Ascending aorta (tissue), 2 donors: ENCODE measurements at regions of chr5 and their contacts with region 1.

Region 1: DNA sequence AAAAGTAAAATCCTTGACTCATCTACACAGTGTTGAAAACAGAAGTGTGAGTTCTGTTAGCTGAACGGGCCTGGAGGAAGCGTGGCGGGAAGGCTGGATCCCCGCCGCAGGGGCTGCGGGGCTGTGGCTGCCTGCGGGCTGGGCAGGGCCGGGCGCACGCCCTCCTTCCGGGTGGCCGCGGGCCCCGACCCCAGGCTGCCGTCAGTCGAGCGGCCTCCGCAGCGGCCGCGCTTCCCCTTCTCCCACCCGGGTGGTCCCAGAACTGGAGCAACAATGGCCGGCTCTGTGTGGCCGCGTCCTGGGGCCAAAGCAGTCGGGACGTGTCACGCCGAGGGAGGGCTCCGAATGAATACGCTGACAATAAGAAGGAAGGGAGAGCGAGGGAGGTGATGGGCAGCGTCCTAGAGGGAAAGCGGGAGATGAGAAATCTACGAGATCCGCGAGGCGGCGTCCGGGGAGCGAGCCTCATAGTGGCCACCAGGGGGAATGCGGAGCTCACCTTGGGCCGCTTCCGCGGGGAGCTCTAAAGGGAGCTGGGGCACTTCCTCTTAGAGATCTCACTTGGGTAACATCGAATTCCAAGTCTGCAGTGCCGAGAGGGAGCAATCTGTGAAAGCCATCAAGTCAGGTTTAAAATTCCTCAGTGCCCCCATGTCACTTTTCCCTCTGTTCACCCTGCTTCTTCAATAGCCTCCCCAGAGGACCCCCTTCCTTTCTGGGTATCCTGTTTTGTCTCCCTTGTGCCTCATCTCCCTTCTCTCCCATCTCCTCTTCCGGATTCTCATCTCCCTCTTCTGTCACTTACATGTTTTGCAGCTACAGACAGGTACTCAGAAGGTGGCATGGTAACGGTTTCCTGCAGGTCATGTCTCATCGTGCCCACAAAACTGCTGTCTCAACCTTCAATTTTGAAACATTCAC is 83.9 kb downstream of the SLC1A3 start:
- DNase-seq: peak in 1 of 2 donors; percentile 86
- H3K4me3 ChIP-seq: peak overlapping the region; percentile 63 to 81
- H3K27ac ChIP-seq: peak overlapping the region; percentile 67 to 80
- H3K4me1 ChIP-seq: peaks cover 0 to 15% of the 10 kb centered on the region in 2 donors
- H3K27me3 ChIP-seq: no peaks in the 10 kb centered on the region
- CTCF ChIP-seq: peak; percentile 63 to 85 (median 76)

Region 2: DNA sequence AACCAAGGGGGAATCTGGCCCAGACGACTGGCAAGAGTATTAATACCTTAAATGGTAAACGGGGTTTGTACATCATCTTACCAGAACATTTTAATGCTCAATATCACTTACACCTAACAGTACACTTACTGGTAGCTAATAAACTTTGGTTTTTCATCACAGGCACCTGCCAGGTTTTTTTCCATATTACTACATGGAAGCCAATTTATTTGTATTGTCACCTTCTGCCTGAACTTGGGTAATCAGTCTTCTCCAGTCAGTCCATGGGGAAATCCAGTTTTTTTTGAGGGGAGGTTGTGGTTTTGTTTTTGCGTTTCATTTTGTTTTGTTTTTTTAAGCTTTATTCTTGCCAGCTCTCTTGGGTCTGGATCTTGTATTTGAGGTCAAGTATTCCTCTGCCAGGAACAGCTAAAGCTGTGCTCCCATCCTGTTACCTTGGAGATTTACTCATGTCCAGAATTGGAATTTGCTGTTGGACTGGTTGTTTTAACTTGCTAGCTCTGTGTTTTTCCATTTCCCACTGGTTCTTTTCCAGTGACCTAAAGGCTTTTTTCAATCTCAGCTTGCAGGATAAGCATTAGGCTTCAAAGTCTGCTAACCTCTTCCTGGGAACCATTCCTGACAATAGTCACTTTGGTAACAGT is 437.5 kb before region 1 on chr5:
- intact Hi-C with region 1: loop called (anchors 5 kb)
- DNase-seq: no peak
- H3K4me3 ChIP-seq: peak overlapping the region in 1 of 2 donors; percentile 23
- H3K27ac ChIP-seq: peak overlapping the region; percentile 55 to 60
- H3K4me1 ChIP-seq: peaks cover 4 to 18% of the 10 kb centered on the region in 2 donors
- H3K27me3 ChIP-seq: no peaks in the 10 kb centered on the region
- CTCF ChIP-seq: no peak

Region 3: DNA sequence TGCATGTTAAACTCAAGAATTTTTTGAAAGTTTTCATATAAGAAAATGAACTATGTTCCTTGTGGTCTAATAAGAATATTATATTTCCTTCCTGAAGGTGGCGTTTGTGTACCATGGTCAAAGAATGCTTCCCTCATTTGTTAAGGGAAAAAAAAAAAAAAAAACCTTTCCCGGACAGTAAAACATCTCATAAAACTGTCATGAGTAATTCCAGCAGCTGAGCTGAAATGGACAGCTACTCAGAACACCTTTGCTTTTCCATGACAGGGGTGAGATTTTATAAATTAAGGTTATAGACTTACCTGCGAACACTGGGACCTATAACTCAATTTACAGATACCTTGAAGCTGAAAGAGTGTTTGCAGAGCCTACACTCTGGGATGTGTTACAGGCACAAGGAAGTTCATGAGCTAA is 275.4 kb before region 1 on chr5:
- intact Hi-C with region 1: loop called (anchors 1 kb)
- DNase-seq: no peak
- H3K4me3 ChIP-seq: no peak overlapping the region
- H3K27ac ChIP-seq: no peak overlapping the region
- H3K4me1 ChIP-seq: no peaks in the 10 kb centered on the region
- H3K27me3 ChIP-seq: no peaks in the 10 kb centered on the region
- CTCF ChIP-seq: peak; percentile 33 to 60 (median 37)

Region 4: DNA sequence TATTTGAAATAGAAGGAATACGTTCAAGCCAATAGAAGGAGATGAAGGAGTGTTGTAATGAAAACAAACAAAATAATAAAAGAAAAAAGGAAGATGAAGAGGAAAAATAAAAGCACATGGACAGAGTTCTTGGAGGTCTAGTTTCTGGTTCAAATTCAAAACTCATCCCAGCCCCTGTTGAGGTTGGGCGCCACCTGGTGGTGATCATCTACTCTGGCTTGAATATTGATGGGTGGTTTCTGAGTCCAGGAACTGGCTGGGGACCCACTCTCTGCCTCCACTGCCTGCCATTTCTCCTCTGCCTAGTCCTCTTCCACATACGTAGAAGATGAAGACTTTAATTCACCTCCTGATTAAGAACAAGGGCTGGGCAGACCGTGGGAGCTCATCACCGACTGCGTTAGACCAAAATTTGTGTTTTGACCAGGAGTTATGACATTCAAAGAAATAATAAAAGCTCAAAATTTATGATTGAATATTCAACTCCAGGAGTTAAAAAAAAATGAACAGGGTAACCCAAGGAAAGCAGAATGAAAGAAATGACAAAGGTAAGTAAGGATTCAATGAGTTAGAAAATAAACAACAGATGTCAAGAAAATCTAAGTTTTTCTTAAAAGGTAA is 182.9 kb before region 1 on chr5:
- intact Hi-C with region 1: loop called (anchors 2 kb)
- DNase-seq: peak in 1 of 2 donors; percentile 86
- H3K4me3 ChIP-seq: no peak overlapping the region
- H3K27ac ChIP-seq: no peak overlapping the region
- H3K4me1 ChIP-seq: no peaks in the 10 kb centered on the region
- H3K27me3 ChIP-seq: no peaks in the 10 kb centered on the region
- CTCF ChIP-seq: peak; percentile 47 to 77 (median 67)

Region 5: GRCh38 chr5:36657563-36657995 is 32.7 kb before region 1 on chr5:
- intact Hi-C with region 1: loop called (anchors 5 kb)
- DNase-seq: peak in 1 of 2 donors; percentile 85
- H3K4me3 ChIP-seq: no peak overlapping the region
- H3K27ac ChIP-seq: peak overlapping the region; percentile 6 to 11
- H3K4me1 ChIP-seq: peaks cover 3 to 4% of the 10 kb centered on the region in 2 donors
- H3K27me3 ChIP-seq: no peaks in the 10 kb centered on the region
- CTCF ChIP-seq: no peak